ENCODE measurements at regions of chr15 and their contacts with region 1.

Region 1: DNA sequence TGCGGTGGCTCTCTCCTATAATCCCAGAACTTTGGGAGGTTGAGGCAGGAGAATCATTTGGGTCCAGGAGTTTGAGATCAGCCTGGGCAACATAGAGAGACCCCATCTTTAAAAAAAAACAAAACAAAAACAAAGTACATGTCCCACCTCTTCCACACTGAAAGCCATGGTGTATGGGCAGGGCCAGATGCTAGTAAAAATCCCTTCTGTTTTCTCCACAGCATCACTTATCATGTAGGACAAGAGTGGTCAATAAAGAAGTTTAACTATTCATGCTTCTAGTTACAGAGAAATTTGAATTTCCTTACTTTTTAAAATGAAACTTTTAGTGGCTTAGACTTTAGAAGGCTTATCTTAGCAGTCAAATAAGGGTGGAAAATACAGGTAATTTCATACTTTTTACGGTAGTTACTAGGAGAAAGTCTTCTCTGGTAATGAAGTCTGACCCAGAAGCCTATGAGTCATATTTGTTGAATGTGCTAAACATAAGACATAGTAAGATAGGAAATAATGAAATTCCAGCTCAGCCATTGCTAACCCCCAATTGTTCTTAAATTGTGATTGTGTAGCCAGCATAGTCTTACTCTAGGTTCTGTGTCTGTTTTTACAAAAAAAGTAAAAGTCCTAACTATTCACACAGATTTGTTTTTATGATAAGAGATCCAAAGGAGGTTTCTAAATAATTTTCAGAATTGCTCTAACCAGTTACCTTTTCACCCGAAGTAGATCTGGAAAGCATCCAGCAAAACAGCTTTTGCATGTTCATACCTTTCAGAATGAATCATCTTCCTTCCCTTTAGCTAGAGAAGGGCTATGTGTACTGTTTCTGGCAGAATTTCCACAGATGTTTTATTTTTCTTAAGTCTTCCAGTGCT is 16.4 kb upstream of the ZNF609 start:
- DNase-seq: peak; percentile 70
- H3K4me3 Mint-ChIP-seq: peak overlapping the region; percentile 76
- H3K27ac Mint-ChIP-seq: peak overlapping the region; percentile 94
- H3K4me1 Mint-ChIP-seq: peaks cover 40% of the 10 kb centered on the region
- H3K27me3 Mint-ChIP-seq: no peaks in the 10 kb centered on the region

Region 2: GRCh38 chr15:64355944-64356709 is 87.9 kb before region 1 on chr15 and contains the start of gene CSNK1G1:
- intact Hi-C with region 1: no loop called
- DNase-seq: peak; percentile 97
- H3K4me3 Mint-ChIP-seq: peak within 1 kb of the TSS; percentile 89
- H3K27ac Mint-ChIP-seq: peak within 1 kb of the TSS; percentile 97
- H3K4me1 Mint-ChIP-seq: peaks cover 17% of the 10 kb centered on the region
- H3K27me3 Mint-ChIP-seq: no peaks in the 10 kb centered on the region
- total RNA-seq, gene CSNK1G1: 28.5 and 28.6 TPM in 2 replicates

Region 3: GRCh38 chr15:64430000-64430735 is 13.8 kb before region 1 on chr15:
- intact Hi-C with region 1: loop called (anchors 1 kb)
- DNase-seq: peak; percentile 87
- H3K4me3 Mint-ChIP-seq: peak overlapping the region; percentile 79
- H3K27ac Mint-ChIP-seq: peak overlapping the region; percentile 95
- H3K4me1 Mint-ChIP-seq: peaks cover 40% of the 10 kb centered on the region
- H3K27me3 Mint-ChIP-seq: no peaks in the 10 kb centered on the region

Region 4: DNA sequence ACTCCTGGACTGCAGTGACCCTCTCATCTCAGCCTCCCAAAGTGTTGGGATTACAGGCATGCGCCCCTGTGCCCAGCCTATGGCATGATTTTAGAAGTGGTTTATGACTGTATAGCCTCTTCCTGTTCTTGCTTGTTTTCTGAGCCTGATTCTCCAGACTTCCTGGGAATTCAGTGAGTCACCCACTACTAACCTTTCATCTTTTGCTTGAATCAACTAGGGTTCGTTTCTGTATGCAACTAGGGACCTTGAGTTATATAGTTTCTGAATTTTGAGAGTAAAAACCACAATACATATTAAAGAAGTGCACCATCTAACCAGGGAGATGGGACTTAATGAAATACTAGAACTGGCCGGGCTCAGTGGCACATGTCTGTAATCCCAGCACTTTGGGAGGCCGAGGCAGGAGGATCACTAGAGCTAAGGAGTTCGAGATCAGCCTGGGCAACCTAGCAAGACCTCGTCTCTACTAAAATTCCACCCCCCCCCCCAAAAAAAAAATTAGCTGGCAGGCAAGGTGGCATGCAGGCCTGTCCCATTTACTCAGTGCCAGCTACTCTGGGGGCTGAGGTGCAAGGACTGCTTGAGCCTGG is 92.4 kb after region 1 on chr15:
- intact Hi-C with region 1: loop called (anchors 1 kb)
- DNase-seq: peak; percentile 64
- H3K4me3 Mint-ChIP-seq: peak overlapping the region; percentile 14
- H3K27ac Mint-ChIP-seq: peak overlapping the region; percentile 29
- H3K4me1 Mint-ChIP-seq: peaks cover 37% of the 10 kb centered on the region
- H3K27me3 Mint-ChIP-seq: no peaks in the 10 kb centered on the region

Region 5: DNA sequence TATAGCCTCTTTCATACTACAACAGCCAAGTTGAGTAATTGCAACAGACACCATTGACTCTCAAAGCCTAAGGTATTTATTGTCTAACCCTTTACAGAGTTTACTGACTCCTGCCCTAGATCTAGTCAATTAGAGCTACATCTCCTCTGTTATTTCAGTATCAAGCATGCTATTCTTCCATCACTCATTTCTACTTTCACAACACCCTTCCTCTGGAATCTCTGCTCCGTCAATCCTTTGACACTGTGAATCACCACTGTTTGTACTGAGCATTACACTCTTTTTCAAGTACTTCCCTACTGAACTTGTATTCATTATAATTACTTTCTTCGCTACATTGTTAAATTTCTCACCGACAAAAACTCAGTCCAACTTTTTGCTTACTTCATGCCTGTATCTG is 138.2 kb after region 1 on chr15:
- intact Hi-C with region 1: loop called (anchors 5 kb)
- DNase-seq: no peak
- H3K4me3 Mint-ChIP-seq: no peak overlapping the region
- H3K27ac Mint-ChIP-seq: no peak overlapping the region
- H3K4me1 Mint-ChIP-seq: peaks cover 27% of the 10 kb centered on the region
- H3K27me3 Mint-ChIP-seq: no peaks in the 10 kb centered on the region